ENCODE measurements at regions of chr2 and their contacts with region 1.

Region 1: DNA sequence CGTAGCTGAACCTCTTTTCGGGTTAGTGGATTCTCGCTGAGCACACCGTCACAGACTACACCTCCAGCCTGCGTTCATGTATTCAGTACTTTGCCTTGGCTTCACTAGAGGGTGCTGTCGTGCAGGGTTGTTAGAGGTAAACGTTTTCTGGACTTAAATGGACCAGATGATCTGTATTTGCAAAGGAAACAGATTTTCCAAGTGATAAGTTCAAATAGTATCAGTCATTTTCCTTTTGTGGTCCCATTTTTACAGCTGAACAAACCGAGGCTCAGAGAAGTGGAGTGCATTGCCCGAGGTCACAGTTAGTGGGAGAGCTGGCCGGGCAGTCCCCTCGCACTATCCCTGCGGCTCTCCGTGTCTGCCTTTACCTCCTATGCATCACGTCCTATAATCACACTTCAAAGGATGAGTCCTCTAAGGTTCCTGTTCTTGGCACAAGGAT is 125.9 kb downstream of the MAP4K4 start:
- DNase-seq: peak; percentile 89
- H3K4me3 Mint-ChIP-seq: peak overlapping the region; percentile 51
- H3K27ac Mint-ChIP-seq: peak overlapping the region; percentile 43
- H3K4me1 Mint-ChIP-seq: peaks cover 67% of the 10 kb centered on the region
- H3K27me3 Mint-ChIP-seq: no peaks in the 10 kb centered on the region
- CTCF ChIP-seq: peak; percentile 61

Region 2: DNA sequence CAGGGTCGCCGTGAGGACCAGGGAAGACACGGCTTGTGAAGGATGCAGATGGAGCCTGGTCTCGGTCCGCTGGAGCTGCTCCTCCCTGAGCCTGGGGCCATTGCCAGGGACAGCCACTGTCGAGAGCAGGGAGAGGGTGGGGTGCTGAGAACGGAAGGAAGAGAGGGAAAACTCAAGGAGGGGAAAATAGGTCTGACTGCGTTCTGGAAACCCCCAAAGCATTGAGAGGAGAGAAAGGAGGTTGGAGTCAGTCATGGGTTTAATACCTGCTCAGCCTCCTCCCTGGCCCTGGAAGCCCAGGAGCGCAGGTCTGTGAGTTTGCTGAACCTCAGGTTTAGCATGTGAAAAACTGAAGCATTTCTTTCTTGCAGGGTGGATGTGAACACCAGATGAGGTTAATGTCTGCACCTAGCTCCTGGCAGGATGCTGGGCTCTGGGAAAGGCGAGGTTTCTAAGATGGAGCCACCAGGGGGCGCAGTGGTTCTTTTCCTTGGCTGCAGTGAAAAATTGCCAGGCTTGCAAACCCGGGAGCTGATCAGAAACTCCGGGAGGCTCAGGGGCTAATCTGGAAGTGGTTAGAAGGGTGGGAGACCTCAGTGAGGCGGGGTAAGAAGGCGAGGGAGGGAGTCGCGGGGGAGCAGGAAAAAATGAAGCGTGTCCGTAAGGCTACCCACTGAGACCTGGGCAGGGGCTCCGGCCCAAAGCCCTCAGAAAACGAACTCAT is 481.3 kb before region 1 on chr2:
- CTCF ChIA-PET with region 1: interaction called, 14 read pairs
- POLR2A ChIA-PET with region 1: interaction called, 3 read pairs
- intact Hi-C with region 1: no loop called
- DNase-seq: peak; percentile 78
- H3K4me3 Mint-ChIP-seq: no peak overlapping the region
- H3K27ac Mint-ChIP-seq: no peak overlapping the region
- H3K4me1 Mint-ChIP-seq: peaks cover 5% of the 10 kb centered on the region
- H3K27me3 Mint-ChIP-seq: no peaks in the 10 kb centered on the region
- CTCF ChIP-seq: peak; percentile 78

Region 3: GRCh38 chr2:101518578-101519492 is 304.5 kb before region 1 on chr2:
- CTCF ChIA-PET with region 1: interaction called, 36 read pairs
- POLR2A ChIA-PET with region 1: interaction called, 10 read pairs
- intact Hi-C with region 1: no loop called
- DNase-seq: peak; percentile 81
- H3K4me3 Mint-ChIP-seq: peak overlapping the region; percentile 44
- H3K27ac Mint-ChIP-seq: no peak overlapping the region
- H3K4me1 Mint-ChIP-seq: peaks cover 25% of the 10 kb centered on the region
- H3K27me3 Mint-ChIP-seq: no peaks in the 10 kb centered on the region
- CTCF ChIP-seq: peak; percentile 30

Region 4: GRCh38 chr2:101736861-101737291 is 86.5 kb before region 1 on chr2:
- CTCF ChIA-PET with region 1: interaction called, 8 read pairs
- POLR2A ChIA-PET with region 1: interaction called, 10 read pairs
- intact Hi-C with region 1: loop called (anchors 2 kb)
- DNase-seq: peak; percentile 91
- H3K4me3 Mint-ChIP-seq: peak overlapping the region; percentile 37
- H3K27ac Mint-ChIP-seq: peak overlapping the region; percentile 83
- H3K4me1 Mint-ChIP-seq: peaks cover 67% of the 10 kb centered on the region
- H3K27me3 Mint-ChIP-seq: no peaks in the 10 kb centered on the region
- CTCF ChIP-seq: no peak

Region 5: DNA sequence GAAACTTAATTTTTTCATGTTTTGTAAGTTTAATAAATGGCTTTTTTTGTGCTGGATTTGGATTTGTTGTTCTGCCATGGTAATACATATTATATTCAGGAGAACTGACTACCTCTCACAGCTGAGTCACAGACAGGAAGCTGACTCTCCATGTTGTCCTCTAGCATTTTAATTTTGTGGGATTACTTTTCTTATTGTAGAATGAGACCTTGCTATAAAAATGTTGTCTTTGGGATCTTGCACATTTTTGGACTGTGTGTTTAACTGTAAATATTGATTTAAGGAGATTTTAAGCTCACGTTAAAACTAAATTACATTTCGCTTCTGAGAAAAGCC is 77.0 kb before region 1 on chr2:
- CTCF ChIA-PET with region 1: interaction called, 8 read pairs
- POLR2A ChIA-PET with region 1: interaction called, 13 read pairs
- intact Hi-C with region 1: no loop called
- DNase-seq: peak; percentile 57
- H3K4me3 Mint-ChIP-seq: peak overlapping the region; percentile 29
- H3K27ac Mint-ChIP-seq: peak overlapping the region; percentile 92
- H3K4me1 Mint-ChIP-seq: peaks cover 56% of the 10 kb centered on the region
- H3K27me3 Mint-ChIP-seq: no peaks in the 10 kb centered on the region
- CTCF ChIP-seq: no peak